CD4-positive, alpha-beta memory T cell (primary cell): ENCODE measurements at regions of chr17 and their contacts with region 1.

Region 1: DNA sequence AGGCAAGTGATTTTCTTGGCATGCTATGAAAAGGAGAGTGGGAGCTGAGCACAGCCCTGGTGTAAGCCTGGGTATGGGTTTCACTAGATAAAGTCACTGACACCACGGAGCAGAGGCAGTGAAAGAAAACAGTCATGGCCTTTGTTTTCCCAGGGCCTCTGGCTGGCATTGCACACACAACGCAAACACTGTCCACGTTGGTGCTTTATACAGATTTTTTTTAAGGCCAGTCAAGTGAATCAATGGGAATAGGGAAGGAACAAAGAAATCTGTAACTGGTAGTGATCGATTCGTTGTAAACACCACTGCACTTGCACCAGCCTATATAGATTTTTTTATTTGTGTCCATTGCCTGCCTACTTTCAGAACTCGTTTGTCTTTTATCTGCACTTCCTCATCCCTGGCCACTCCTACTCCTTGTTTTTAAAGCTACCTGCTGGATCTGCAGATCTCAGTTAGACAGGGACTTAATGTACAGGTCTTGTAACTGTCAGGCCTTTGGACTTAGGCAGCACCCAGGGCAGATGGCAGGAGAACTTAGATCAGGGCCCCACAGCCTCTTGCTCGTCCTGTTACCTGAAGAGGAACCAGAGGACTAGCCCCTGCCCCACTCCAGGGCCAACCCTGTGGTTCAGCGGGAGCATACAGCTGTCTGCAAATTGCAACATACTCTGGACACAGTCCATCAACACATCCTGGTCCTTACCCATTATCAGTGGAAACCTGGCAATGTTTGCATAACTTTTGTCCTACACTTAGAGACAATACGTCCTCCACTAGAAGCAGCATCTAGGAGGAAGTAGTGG is 10.6 kb upstream of the TMIGD1 start:
- DNase-seq: no peak
- H3K4me3 ChIP-seq: no peak overlapping the region
- H3K4me3 Mint-ChIP-seq: no peak overlapping the region
- H3K27ac ChIP-seq: no peak overlapping the region
- H3K27ac Mint-ChIP-seq: peak overlapping the region in 1 of 7 donors; percentile 4
- H3K4me1 ChIP-seq: peaks cover 9% of the 10 kb centered on the region
- H3K4me1 Mint-ChIP-seq: peaks cover 6 to 9% (median 7%) of the 10 kb centered on the region in 4 donors
- H3K27me3 ChIP-seq: no peaks in the 10 kb centered on the region
- H3K27me3 Mint-ChIP-seq: no peaks in the 10 kb centered on the region

Region 2: GRCh38 chr17:30124273-30124796 is 220.2 kb before region 1 on chr17:
- CTCF ChIA-PET with region 1: interaction called, 79 read pairs
- POLR2A ChIA-PET with region 1: interaction called, 3 read pairs
- intact Hi-C with region 1: loop called (anchors 1 kb)
- DNase-seq: no peak
- H3K4me3 ChIP-seq: no peak overlapping the region
- H3K4me3 Mint-ChIP-seq: no peak overlapping the region
- H3K27ac ChIP-seq: no peak overlapping the region
- H3K27ac Mint-ChIP-seq: peak overlapping the region in 3 of 7 donors; percentile 10 to 83 (median 53)
- H3K4me1 ChIP-seq: peaks cover 20% of the 10 kb centered on the region
- H3K4me1 Mint-ChIP-seq: peaks cover 24 to 47% (median 34%) of the 10 kb centered on the region in 4 donors
- H3K27me3 ChIP-seq: no peaks in the 10 kb centered on the region
- H3K27me3 Mint-ChIP-seq: no peaks in the 10 kb centered on the region

Region 3: DNA sequence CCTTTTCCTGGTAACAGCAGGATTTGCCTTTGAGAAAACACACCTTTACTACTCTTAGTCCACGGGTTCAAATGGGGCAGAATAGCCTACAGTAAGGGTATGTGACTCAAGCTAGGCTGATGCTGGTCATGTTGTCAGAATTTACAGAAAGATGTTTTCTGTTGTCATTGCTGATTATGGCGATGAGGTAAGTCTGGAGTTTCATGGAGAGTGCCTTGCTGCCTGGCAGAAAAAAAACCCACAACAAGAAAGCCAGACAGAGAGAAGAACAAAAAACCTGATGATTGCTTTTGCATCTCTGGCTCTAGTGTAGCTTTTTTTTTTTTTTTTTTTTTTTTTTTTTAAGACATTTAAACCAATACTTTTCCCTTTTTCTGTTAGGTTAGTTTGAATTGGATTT is 156.9 kb before region 1 on chr17:
- CTCF ChIA-PET with region 1: no interaction called
- POLR2A ChIA-PET with region 1: no interaction called
- intact Hi-C with region 1: no loop called
- DNase-seq: no peak
- H3K4me3 ChIP-seq: no peak overlapping the region
- H3K4me3 Mint-ChIP-seq: no peak overlapping the region
- H3K27ac ChIP-seq: no peak overlapping the region
- H3K27ac Mint-ChIP-seq: peak overlapping the region in 2 of 7 donors; percentile 8 to 66
- H3K4me1 ChIP-seq: no peaks in the 10 kb centered on the region
- H3K4me1 Mint-ChIP-seq: peaks cover 0 to 2% (median 0%) of the 10 kb centered on the region in 4 donors
- H3K27me3 ChIP-seq: no peaks in the 10 kb centered on the region
- H3K27me3 Mint-ChIP-seq: no peaks in the 10 kb centered on the region

Region 4: DNA sequence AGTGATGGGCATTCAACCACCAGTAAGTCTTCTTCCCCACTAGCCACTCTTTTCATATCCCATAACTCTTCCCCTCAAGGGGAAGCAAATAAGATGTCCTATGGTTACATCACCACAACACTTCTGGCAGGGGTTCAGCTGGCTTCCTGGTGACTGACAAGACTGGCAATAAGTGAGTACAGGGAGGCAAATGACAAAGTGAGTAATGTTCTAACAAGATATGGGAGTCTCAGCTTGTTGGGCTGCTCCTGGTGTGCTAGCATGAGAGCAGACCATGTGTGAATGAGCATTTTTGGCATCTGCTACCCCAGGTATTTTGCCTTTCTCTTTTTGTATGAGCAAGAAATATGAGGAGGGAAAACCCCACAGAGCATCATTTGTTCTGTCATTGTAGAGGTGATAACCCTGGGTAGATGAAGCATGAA is 20.6 kb before region 1 on chr17:
- CTCF ChIA-PET with region 1: interaction called, 37 read pairs
- POLR2A ChIA-PET with region 1: interaction called, 8 read pairs
- intact Hi-C with region 1: no loop called
- DNase-seq: peak; percentile 34 to 71 (median 48)
- H3K4me3 ChIP-seq: peak overlapping the region; percentile 9 to 14
- H3K4me3 Mint-ChIP-seq: peak overlapping the region; percentile 62 to 80 (median 70)
- H3K27ac ChIP-seq: peak overlapping the region; percentile 45
- H3K27ac Mint-ChIP-seq: peak overlapping the region; percentile 82 to 96 (median 93)
- H3K4me1 ChIP-seq: peaks cover 48% of the 10 kb centered on the region
- H3K4me1 Mint-ChIP-seq: peaks cover 36 to 54% (median 41%) of the 10 kb centered on the region in 4 donors
- H3K27me3 ChIP-seq: no peaks in the 10 kb centered on the region
- H3K27me3 Mint-ChIP-seq: no peaks in the 10 kb centered on the region

Region 5: GRCh38 chr17:30363715-30364202 is 19.3 kb after region 1 on chr17:
- CTCF ChIA-PET with region 1: interaction called, 10 read pairs
- POLR2A ChIA-PET with region 1: interaction called, 4 read pairs
- intact Hi-C with region 1: loop called (anchors 1 kb)
- DNase-seq: peak; percentile 80 to 94 (median 83)
- H3K4me3 ChIP-seq: peak overlapping the region in 1 of 2 donors; percentile 12
- H3K4me3 Mint-ChIP-seq: peak overlapping the region; percentile 50 to 83 (median 70)
- H3K27ac ChIP-seq: no peak overlapping the region
- H3K27ac Mint-ChIP-seq: peak overlapping the region; percentile 77 to 94 (median 89)
- H3K4me1 ChIP-seq: peaks cover 28% of the 10 kb centered on the region
- H3K4me1 Mint-ChIP-seq: peaks cover 19 to 37% (median 23%) of the 10 kb centered on the region in 4 donors
- H3K27me3 ChIP-seq: no peaks in the 10 kb centered on the region
- H3K27me3 Mint-ChIP-seq: no peaks in the 10 kb centered on the region

Region 6: GRCh38 chr17:30378824-30379302 is 34.4 kb after region 1 on chr17 and contains the start of gene CPD:
- CTCF ChIA-PET with region 1: interaction called, 25 read pairs
- POLR2A ChIA-PET with region 1: interaction called, 11 read pairs
- intact Hi-C with region 1: loop called (anchors 1 kb)
- DNase-seq: peak; percentile 94 to 98 (median 95)
- H3K4me3 ChIP-seq: peak within 1 kb of the TSS; percentile 56 to 90
- H3K4me3 Mint-ChIP-seq: peak within 1 kb of the TSS; percentile 91 to 99 (median 96)
- H3K27ac ChIP-seq: peak within 1 kb of the TSS; percentile 85
- H3K27ac Mint-ChIP-seq: peak within 1 kb of the TSS; percentile 93 to 99 (median 97)
- H3K4me1 ChIP-seq: peaks cover 64% of the 10 kb centered on the region
- H3K4me1 Mint-ChIP-seq: peaks cover 43 to 65% (median 55%) of the 10 kb centered on the region in 4 donors
- H3K27me3 ChIP-seq: no peaks in the 10 kb centered on the region
- H3K27me3 Mint-ChIP-seq: peaks cover 0 to 2% of the 10 kb centered on the region in 2 donors
- total RNA-seq, gene CPD: 23.6 to 24.6 TPM

Region 7: DNA sequence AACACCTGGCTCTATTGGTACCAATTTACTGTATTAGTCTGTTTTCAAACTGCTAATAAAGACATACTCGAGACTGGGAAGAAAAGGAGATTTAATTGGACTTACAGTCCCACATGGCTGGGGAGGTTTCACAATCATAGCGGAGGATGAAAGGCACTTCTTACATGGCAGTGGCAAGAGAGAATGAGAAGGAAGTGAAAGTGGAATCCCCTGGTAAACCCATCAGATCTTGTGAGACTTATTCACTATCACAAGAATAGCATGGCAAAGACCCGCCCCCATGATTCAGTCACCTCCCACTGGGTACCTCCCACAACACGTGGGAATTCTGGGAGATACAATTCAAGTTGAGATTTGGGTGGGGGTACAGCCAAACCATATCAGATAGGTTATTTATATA is 110.1 kb after region 1 on chr17:
- CTCF ChIA-PET with region 1: no interaction called
- POLR2A ChIA-PET with region 1: no interaction called
- intact Hi-C with region 1: no loop called
- DNase-seq: no peak
- H3K4me3 ChIP-seq: no peak overlapping the region
- H3K4me3 Mint-ChIP-seq: no peak overlapping the region
- H3K27ac ChIP-seq: no peak overlapping the region
- H3K27ac Mint-ChIP-seq: peak overlapping the region in 1 of 7 donors; percentile 18
- H3K4me1 ChIP-seq: no peaks in the 10 kb centered on the region
- H3K4me1 Mint-ChIP-seq: peaks cover 0 to 1% (median 0%) of the 10 kb centered on the region in 4 donors
- H3K27me3 ChIP-seq: no peaks in the 10 kb centered on the region
- H3K27me3 Mint-ChIP-seq: no peaks in the 10 kb centered on the region

Region 8: DNA sequence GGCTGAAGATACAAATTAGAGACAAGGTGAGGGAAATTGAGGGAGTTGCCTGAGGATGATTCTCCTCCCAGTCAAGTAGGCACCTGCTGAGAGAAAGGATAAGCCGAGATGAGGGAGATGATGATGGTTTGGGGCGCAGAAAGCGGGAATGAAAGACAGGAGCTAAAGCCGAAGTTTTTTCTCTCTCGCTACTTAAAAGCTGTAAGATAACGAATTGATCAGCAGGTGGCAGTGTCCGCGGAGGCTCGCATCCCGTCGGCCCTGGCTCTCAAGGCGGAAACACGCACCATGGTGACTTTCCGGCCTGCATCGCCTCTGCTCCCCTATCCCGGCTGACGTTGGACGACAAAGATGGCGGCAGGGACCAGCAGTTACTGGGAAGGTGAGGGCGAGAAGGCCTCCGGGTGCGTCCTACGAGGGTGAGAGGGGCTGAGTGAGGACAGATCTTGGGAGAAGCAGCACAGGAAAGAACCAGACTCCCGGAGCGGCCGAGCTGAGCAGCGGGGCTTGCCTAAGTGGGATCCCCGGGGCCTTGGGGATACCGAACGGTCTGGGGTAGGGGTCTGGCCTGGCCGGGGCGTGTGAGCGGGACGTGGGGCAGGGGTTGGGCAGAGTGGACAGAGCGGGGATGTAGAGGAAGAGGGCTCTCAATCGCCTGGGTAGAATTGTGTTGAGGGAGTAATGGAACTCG is 132.7 kb after region 1 on chr17 and contains the start of gene GOSR1:
- CTCF ChIA-PET with region 1: interaction called, 18 read pairs
- POLR2A ChIA-PET with region 1: no interaction called
- intact Hi-C with region 1: loop called (anchors 5 kb)
- DNase-seq: peak; percentile 87 to 94 (median 90)
- H3K4me3 ChIP-seq: peak within 1 kb of the TSS; percentile 77 to 94
- H3K4me3 Mint-ChIP-seq: peak within 1 kb of the TSS; percentile 92 to 99 (median 97)
- H3K27ac ChIP-seq: peak within 1 kb of the TSS; percentile 99
- H3K27ac Mint-ChIP-seq: peak within 1 kb of the TSS; percentile 94 to 100 (median 98)
- H3K4me1 ChIP-seq: peaks cover 20% of the 10 kb centered on the region
- H3K4me1 Mint-ChIP-seq: peaks cover 20 to 45% (median 37%) of the 10 kb centered on the region in 4 donors
- H3K27me3 ChIP-seq: peaks cover 4% of the 10 kb centered on the region
- H3K27me3 Mint-ChIP-seq: peaks cover 0 to 2% of the 10 kb centered on the region in 2 donors
- total RNA-seq, gene GOSR1: 59.5 to 64.5 TPM